ENCODE measurements at regions of chr16 and their contacts with region 1.

Region 1: GRCh38 chr16:11977376-11978041 is 975 bp downstream of the SNX29 start:
- H3K4me3 Mint-ChIP-seq: peak overlapping the region; percentile 98
- H3K27ac Mint-ChIP-seq: peak overlapping the region; percentile 98
- H3K4me1 Mint-ChIP-seq: peaks cover 66% of the 10 kb centered on the region
- H3K27me3 Mint-ChIP-seq: no peaks in the 10 kb centered on the region

Region 2: DNA sequence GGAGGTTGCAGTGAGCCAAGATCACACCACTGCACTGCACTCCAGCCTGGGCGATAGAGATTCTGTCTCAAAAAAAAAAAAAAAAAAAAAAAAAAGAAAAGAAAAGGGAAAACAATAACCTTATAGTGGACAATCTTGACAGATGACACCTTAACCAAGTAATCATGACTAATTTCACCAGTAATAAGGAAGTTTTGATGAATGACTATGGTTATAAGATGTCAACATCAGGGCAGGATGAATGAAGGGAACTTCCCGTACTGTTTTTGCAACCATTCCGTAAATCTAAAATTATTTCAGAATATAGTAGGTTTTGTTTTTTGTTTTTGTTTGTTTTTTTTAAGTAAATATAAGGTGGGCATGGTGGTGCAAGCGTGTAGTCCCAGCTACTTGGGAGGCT is 84.7 kb before region 1 on chr16:
- intact Hi-C with region 1: no loop called
- H3K4me3 Mint-ChIP-seq: no peak overlapping the region
- H3K27ac Mint-ChIP-seq: no peak overlapping the region
- H3K4me1 Mint-ChIP-seq: peaks cover 6% of the 10 kb centered on the region
- H3K27me3 Mint-ChIP-seq: no peaks in the 10 kb centered on the region

Region 3: GRCh38 chr16:11915644-11916523 is 61.6 kb before region 1 on chr16 and contains the start of gene GSPT1:
- intact Hi-C with region 1: loop called (anchors 2 kb)
- H3K4me3 Mint-ChIP-seq: peak within 1 kb of the TSS; percentile 89
- H3K27ac Mint-ChIP-seq: peak within 1 kb of the TSS; percentile 91
- H3K4me1 Mint-ChIP-seq: peaks cover 27% of the 10 kb centered on the region
- H3K27me3 Mint-ChIP-seq: peaks cover 10% of the 10 kb centered on the region

Region 4: GRCh38 chr16:12062343-12063005 is 85.0 kb after region 1 on chr16:
- intact Hi-C with region 1: loop called (anchors 2 kb)
- H3K4me3 Mint-ChIP-seq: peak overlapping the region; percentile 30
- H3K27ac Mint-ChIP-seq: peak overlapping the region; percentile 85
- H3K4me1 Mint-ChIP-seq: peaks cover 70% of the 10 kb centered on the region
- H3K27me3 Mint-ChIP-seq: no peaks in the 10 kb centered on the region

Region 5: DNA sequence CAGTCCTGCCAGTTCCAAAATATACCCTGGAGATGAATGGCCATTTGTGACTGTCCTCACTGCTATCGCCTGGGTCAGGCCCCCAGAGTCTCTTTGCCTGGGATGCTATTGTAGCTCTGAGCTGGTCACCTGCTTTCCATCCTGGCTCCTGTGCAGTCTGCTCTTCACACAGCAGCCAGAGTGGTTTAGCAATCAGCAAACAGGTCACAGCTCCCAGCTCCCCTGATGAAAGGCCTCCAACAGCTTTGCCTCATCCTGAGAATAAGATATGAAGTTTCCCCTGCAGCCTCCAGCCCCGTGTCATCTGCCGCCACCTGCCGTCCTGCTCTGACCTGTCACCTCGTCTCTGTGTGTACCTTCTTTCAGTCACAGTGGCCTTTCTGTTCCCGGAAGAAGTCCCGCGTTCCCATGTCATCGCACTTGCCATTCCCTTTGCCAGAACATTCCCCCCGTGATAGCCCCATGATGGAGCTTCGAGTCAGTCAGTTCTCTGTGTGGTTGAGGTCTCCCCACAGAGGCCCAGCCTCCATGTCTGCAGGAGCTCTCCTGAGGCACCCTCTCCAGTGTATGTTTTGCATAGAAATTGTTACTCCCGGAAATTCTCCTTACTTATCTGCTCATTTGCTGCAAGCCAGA is 280.5 kb after region 1 on chr16:
- intact Hi-C with region 1: no loop called
- H3K4me3 Mint-ChIP-seq: no peak overlapping the region
- H3K27ac Mint-ChIP-seq: no peak overlapping the region
- H3K4me1 Mint-ChIP-seq: peaks cover 10% of the 10 kb centered on the region
- H3K27me3 Mint-ChIP-seq: no peaks in the 10 kb centered on the region